ENCODE measurements at regions of chr12 and their contacts with region 1.

Region 1: DNA sequence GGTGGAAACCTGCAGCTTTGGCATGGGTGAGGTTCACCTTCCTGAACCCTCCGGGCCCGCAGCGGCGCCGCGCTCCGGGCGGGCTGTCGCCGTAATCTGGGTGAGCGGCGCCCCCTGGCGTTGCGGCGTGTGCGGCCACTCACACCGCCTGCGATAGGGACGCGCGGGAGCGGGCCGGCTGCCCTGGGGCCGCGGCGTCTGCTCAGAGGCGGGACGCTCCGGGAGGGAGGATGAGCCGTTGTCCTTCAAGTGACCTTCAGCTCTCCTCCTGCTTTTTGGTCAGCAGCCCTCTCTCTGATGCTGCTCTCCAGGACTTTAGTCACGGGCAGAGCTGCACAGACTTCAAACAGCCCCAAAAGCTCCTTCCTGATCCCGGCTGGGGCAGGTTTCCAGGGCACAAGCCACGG is 211.7 kb upstream of the FKBP4 start:
- DNase-seq: peak; percentile 36
- ATAC-seq: peak; percentile 93
- H3K4me3 ChIP-seq: no peak overlapping the region
- H3K27ac ChIP-seq: no peak overlapping the region
- H3K4me1 ChIP-seq: peaks cover 10% of the 10 kb centered on the region
- H3K27me3 ChIP-seq: no peaks in the 10 kb centered on the region
- CTCF ChIP-seq: peak; percentile 90
- POLR2A ChIP-seq: no peak
- RAD21 ChIP-seq: peak; percentile 93

Region 2: GRCh38 chr12:1804545-1805332 is 778.4 kb before region 1 on chr12:
- CTCF ChIA-PET with region 1: no interaction called
- POLR2A ChIA-PET with region 1: no interaction called
- dilution Hi-C with region 1: no loop called
- in situ Hi-C with region 1: loop called (anchors 10 kb)
- intact Hi-C with region 1: no loop called
- DNase-seq: peak; percentile 88
- ATAC-seq: peak; percentile 90
- H3K4me3 ChIP-seq: no peak overlapping the region
- H3K27ac ChIP-seq: peak overlapping the region; percentile 12; the same call in 1 of the 2 replicates
- H3K4me1 ChIP-seq: no peaks in the 10 kb centered on the region
- H3K27me3 ChIP-seq: no peaks in the 10 kb centered on the region
- CTCF ChIP-seq: no peak
- POLR2A ChIP-seq: no peak
- RAD21 ChIP-seq: no peak

Region 3: DNA sequence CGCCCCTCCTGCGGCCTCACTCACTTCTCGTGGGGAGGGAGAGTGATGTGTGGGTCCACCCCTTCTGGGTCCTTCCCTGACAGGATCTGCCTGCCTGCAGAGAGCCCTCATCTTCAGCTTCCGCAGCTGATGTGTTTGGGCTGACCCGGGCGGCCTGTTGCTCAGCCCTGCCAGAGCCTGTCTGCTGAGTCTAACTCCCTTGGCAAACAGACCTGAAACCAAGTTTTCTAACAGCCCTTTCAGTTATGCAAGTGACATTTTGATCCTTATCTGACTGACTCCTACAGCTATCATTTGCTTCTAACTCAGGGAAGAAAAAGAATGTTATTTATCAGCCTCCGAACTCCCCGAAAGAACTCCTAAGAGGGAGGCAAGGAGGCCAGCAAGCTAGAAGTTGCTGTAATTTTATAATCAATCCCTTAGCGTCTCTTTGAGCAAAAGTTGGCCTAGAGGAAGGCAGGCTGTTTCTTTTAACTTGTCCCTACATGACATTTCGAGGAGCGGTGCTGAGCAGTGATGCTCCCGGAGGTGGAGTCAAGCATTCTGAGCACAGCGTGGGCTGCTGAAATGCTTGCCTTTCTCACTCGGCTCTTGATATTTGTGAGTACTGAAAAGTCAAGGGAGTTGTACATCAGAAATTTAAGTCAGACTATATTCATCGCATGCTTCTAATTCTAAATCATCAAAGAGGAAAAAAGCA is 633.2 kb before region 1 on chr12:
- CTCF ChIA-PET with region 1: no interaction called
- POLR2A ChIA-PET with region 1: no interaction called
- dilution Hi-C with region 1: no loop called
- in situ Hi-C with region 1: no loop called
- intact Hi-C with region 1: loop called (anchors 5 kb)
- DNase-seq: no peak
- ATAC-seq: no peak
- H3K4me3 ChIP-seq: no peak overlapping the region
- H3K27ac ChIP-seq: no peak overlapping the region
- H3K4me1 ChIP-seq: peaks cover 5% of the 10 kb centered on the region
- H3K27me3 ChIP-seq: no peaks in the 10 kb centered on the region
- CTCF ChIP-seq: no peak
- POLR2A ChIP-seq: no peak
- RAD21 ChIP-seq: no peak

Region 4: DNA sequence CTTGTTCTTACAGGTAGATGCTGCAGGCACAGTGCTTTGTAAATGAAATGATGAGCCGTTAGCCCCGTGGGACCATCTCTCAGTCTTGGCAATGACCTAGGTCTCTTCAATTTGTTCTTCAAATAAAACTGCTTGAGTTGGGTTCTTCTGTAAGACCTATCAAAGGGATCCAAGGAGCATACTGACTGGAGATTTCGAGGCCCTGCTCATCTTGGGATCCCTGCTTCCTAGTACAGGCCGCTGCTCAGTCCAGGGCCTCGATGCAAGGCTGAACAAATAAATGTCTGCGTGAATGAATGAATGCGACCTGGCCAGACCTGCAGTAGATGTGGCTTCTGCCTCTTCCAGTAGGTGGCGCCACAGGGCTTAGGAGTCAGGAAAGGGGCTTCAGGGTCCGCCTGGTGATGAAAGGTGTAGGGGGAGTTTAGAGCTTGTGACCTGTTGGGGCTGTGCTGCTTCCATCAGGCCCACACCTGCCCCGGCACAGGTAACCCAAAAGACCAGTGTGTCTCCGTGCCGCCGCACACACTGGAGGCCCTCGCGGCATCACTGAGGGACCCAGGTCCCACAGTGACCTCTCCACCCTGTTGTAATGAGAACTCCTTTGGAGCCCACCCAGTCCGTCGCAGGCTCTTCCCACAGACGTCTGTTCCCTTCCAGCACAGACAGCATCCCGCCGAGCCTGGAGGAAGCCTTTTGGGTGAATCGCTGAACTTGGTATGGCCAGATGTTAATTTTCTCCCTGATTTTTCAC is 525.9 kb before region 1 on chr12:
- CTCF ChIA-PET with region 1: interaction called, 3 read pairs
- POLR2A ChIA-PET with region 1: no interaction called
- dilution Hi-C with region 1: no loop called
- in situ Hi-C with region 1: loop called (anchors 10 kb)
- intact Hi-C with region 1: loop called (anchors 1 kb)
- DNase-seq: peak; percentile 62
- ATAC-seq: no peak
- H3K4me3 ChIP-seq: no peak overlapping the region
- H3K27ac ChIP-seq: no peak overlapping the region
- H3K4me1 ChIP-seq: peaks cover 5% of the 10 kb centered on the region; the same call in 1 of the 2 replicates
- H3K27me3 ChIP-seq: no peaks in the 10 kb centered on the region; the same call in 1 of the 2 replicates
- CTCF ChIP-seq: peak; percentile 71
- POLR2A ChIP-seq: no peak
- RAD21 ChIP-seq: peak; percentile 91

Region 5: GRCh38 chr12:2124466-2125023 is 458.5 kb before region 1 on chr12:
- CTCF ChIA-PET with region 1: no interaction called
- POLR2A ChIA-PET with region 1: no interaction called
- dilution Hi-C with region 1: no loop called
- in situ Hi-C with region 1: no loop called
- intact Hi-C with region 1: loop called (anchors 5 kb)
- DNase-seq: no peak
- ATAC-seq: no peak
- H3K4me3 ChIP-seq: no peak overlapping the region
- H3K27ac ChIP-seq: no peak overlapping the region
- H3K4me1 ChIP-seq: peaks cover 28% of the 10 kb centered on the region
- H3K27me3 ChIP-seq: no peaks in the 10 kb centered on the region
- CTCF ChIP-seq: no peak
- POLR2A ChIP-seq: no peak
- RAD21 ChIP-seq: no peak

Region 6: DNA sequence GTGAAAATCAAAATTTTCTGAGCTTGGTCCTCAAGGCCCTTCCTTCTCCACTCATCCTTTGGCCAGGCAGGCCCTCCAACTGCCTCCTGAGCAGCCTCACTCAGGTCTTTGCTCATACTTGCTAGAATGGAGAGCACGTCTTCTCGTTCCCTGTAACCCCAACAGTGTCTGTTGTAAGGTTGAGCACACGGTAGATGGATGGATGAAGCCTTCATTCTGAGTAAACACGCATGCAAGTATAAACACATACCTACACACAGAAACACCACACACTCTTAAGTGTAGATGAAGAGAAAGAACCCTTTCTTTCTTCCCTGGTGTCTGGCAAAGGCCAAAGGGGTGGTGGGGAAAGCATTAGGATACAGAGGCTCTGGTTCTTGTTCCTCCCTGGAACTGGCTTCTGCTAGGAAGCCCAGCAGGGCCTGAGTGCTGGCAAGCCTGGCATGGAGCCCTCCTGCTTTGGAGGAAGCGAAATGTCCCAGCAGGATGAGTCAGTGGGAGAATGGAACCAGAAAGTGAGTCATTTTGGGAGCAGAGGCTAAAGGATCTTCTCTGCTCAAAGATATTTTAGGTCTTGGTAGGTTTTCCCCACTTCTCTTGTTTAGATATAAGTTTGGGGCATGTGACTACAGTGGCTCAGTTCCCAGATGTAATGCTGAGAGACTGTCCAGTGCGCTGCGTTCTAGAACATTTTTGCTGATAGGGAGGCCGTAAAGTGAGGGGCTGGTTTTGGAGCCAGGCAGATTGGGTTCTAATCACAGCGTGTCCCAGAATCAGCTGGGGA is 402.9 kb before region 1 on chr12:
- CTCF ChIA-PET with region 1: interaction called, 3 read pairs
- POLR2A ChIA-PET with region 1: no interaction called
- dilution Hi-C with region 1: no loop called
- in situ Hi-C with region 1: no loop called
- intact Hi-C with region 1: loop called (anchors 5 kb)
- DNase-seq: peak; percentile 98
- ATAC-seq: peak; percentile 83
- H3K4me3 ChIP-seq: no peak overlapping the region
- H3K27ac ChIP-seq: peak overlapping the region; percentile 68
- H3K4me1 ChIP-seq: peaks cover 24% of the 10 kb centered on the region
- H3K27me3 ChIP-seq: no peaks in the 10 kb centered on the region
- CTCF ChIP-seq: no peak
- POLR2A ChIP-seq: no peak
- RAD21 ChIP-seq: peak; percentile 27; the same call in 1 of the 2 replicates

Region 7: DNA sequence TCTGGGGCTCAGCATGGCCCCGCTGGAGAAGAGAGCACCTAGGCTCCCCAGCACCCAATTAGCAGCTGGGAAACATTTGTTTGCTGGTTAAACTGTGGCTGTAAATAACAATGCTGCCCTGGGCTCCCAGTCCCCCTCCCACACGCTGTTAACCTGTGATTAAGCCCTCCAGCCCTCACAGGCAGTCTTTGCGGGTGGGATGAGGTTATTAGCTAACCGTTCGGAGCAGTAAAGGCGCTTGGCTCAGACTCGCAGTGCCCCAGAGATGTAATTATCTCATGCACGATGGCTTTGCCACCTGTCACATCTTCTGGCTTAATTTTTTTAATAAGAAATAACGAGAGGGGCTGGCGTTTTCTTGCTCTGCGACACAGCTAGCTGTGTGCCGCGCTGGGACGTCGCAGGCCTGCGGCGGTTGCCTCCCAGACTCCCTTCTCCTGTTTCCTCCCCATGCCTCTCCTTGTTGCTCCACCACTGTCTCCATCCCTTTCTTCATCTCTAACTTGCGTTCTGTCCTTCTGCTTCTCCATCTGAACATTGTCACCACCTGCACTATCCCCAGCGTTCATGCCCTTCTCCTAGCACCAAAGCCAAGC is 27.5 kb before region 1 on chr12:
- CTCF ChIA-PET with region 1: no interaction called
- POLR2A ChIA-PET with region 1: no interaction called
- dilution Hi-C with region 1: no loop called
- in situ Hi-C with region 1: no loop called
- intact Hi-C with region 1: no loop called
- DNase-seq: no peak
- ATAC-seq: no peak
- H3K4me3 ChIP-seq: no peak overlapping the region
- H3K27ac ChIP-seq: no peak overlapping the region
- H3K4me1 ChIP-seq: no peaks in the 10 kb centered on the region; the same call in 1 of the 2 replicates
- H3K27me3 ChIP-seq: no peaks in the 10 kb centered on the region
- CTCF ChIP-seq: no peak
- POLR2A ChIP-seq: no peak
- RAD21 ChIP-seq: no peak